ENCODE measurements at regions of chr4 and their contacts with region 1.

Region 1: DNA sequence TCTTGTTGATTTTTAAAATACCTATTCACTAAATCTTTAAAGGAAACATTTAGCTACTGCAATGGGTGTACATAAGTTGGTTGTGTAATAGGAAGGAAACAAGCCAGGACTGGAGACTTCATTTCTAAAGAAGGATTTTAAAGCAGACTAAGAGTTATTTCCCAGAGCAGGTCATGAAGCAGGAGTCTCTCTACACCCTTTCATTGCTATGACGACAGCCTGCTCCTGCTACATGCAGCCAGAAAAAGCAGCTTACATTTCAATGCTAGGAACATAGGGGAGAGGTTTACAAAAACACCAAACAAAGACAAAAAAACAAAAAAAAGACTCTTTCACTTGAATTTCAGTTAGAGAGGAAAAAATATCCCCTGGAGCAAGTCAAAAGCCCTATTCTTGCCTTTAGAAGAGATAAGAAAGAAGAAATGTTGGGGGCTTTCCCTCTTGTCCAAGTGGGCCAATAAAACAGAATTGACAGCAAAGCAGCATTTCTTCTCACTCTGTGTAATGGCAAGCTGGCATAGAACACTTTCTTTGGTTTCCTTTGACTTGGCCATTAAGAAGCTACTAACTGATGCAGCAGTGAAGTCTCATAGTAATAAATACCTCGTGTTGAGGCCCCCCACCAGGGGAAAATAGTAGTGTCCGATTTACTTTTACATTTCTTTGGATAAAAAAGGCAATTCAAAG is 3.4 kb downstream of the SPARCL1 start:
- DNase-seq: no peak
- H3K4me3 ChIP-seq: peak overlapping the region; percentile 46 to 71
- H3K27ac ChIP-seq: peak overlapping the region; percentile 91 to 95
- H3K4me1 ChIP-seq: peaks cover 16 to 40% of the 10 kb centered on the region in 2 donors
- H3K27me3 ChIP-seq: no peaks in the 10 kb centered on the region
- CTCF ChIP-seq: no peak

Region 2: GRCh38 chr4:86271057-86271456 is 1254.7 kb before region 1 on chr4:
- intact Hi-C with region 1: no loop called
- DNase-seq: no peak
- H3K4me3 ChIP-seq: no peak overlapping the region
- H3K27ac ChIP-seq: no peak overlapping the region
- H3K4me1 ChIP-seq: no peaks in the 10 kb centered on the region
- H3K27me3 ChIP-seq: no peaks in the 10 kb centered on the region
- CTCF ChIP-seq: no peak

Region 3: GRCh38 chr4:87286970-87287369 is 238.8 kb before region 1 on chr4:
- intact Hi-C with region 1: no loop called
- DNase-seq: no peak
- H3K4me3 ChIP-seq: no peak overlapping the region
- H3K27ac ChIP-seq: no peak overlapping the region
- H3K4me1 ChIP-seq: no peaks in the 10 kb centered on the region
- H3K27me3 ChIP-seq: no peaks in the 10 kb centered on the region
- CTCF ChIP-seq: no peak

Region 4: GRCh38 chr4:87489678-87490077 is 36.1 kb before region 1 on chr4:
- intact Hi-C with region 1: loop called (anchors 5 kb)
- DNase-seq: no peak
- H3K4me3 ChIP-seq: no peak overlapping the region
- H3K27ac ChIP-seq: peak overlapping the region; percentile 24 to 56
- H3K4me1 ChIP-seq: peaks cover 7 to 11% of the 10 kb centered on the region in 2 donors
- H3K27me3 ChIP-seq: no peaks in the 10 kb centered on the region
- CTCF ChIP-seq: no peak

Region 5: DNA sequence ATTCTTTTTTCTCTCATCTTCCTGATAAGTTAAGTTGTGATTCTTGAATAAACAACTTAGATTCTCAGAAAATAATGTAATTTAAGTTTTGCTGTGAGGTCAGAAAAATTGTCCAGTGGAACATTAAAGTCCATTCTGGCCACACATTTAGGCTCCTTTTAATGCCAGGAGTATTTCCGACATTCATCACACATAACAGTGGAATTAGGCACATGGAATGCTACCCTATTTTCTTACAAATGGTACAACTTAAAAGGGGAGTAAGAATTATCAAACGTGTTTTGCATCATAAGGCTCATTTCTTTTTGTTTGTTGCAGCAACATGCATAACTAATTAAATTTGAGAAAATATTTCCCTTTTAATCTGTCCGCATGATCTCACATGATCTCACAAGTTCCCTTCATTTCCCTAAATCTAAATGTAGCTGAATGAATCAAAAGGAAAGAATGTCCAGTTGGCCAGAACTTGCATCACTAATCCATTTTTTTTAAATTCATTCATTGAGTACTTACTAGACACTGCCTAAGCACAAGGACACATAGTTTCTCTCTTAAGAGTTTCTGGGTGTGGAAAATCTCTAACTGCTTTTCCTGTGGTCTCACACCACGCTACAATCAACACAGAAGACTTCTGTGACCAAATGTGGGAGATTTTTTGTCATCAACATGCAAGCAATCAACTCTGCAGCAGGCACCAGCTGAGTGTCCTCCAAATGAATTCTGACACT is 18.6 kb before region 1 on chr4:
- intact Hi-C with region 1: loop called (anchors 1 kb)
- DNase-seq: no peak
- H3K4me3 ChIP-seq: no peak overlapping the region
- H3K27ac ChIP-seq: peak overlapping the region; percentile 88 to 93
- H3K4me1 ChIP-seq: peaks cover 13 to 36% of the 10 kb centered on the region in 2 donors
- H3K27me3 ChIP-seq: no peaks in the 10 kb centered on the region
- CTCF ChIP-seq: no peak

Region 6: DNA sequence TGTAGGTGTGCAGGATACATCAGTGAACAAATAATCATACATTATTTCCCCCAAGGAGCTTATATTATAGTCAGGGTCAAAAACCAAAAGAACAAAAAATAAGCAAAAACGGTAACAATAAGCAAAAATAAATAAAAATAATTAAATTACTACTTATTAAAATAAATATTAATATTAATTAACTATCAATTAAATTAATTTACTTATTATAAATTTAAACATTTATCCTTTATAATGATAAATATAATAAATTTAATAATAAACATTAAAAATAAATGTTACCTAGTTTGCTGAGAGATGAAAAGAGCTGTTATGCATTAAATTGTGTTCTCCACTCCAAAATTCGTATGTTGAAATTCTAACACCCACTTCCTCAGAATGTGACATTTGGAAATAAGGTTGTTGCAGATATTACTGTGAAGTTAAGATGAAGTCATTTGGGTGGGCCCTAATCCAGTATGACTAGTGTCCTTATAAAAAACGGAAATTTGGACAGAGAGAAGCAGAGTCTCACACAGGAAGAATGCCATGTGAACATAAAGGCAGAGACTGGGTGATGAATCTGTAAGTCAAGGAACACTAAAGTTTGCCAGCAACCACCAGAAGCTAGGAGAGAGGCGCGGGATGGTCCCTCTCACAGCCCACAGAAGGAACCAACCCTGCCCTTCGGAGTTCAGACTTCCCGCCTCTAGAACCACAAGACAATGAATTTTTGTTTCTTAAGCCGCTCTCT is 206.4 kb after region 1 on chr4:
- intact Hi-C with region 1: no loop called
- DNase-seq: no peak
- H3K4me3 ChIP-seq: no peak overlapping the region
- H3K27ac ChIP-seq: no peak overlapping the region
- H3K4me1 ChIP-seq: no peaks in the 10 kb centered on the region
- H3K27me3 ChIP-seq: peaks cover 6% of the 10 kb centered on the region
- CTCF ChIP-seq: no peak